ENCODE measurements at regions of chr10 and their contacts with region 1.

Region 1: DNA sequence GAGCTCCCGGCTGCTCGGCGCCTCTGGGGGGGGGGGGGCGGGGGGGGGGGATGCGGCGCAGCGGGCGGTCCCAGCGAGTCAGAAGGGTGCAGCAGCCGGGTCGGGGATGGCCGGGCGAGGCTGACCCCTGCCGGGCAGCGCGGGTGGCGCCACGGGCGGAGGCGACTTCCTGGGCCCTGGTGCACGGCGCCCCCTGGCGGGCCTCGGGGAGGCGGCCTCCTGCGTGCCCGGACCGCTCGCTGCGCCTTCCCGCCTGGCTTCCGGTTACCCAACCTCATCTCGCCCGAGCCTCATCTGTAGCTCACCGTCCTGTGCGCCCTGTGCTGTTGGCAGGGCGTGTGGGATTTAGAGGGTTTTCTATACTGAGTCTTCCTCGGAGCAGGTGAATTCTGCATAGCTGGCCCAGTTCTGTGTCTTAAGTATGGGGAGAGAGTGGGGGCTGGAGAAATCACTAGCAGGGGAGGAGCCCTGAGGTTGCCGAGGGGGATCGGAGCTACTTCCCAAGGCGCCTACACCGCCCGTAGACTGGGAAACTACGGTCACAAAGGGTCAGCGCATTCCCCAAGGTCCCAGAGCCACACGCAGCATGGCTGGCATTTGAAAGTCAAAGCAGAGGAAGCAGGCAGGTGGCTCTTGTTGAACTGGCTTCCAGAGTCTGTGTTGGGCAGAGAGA is 28.3 kb upstream of the WDFY4 start:
- DNase-seq: peak; percentile 89 to 99
- H3K4me3 ChIP-seq: peak overlapping the region; percentile 55
- H3K4me3 Mint-ChIP-seq: peak overlapping the region; percentile 77
- H3K27ac Mint-ChIP-seq: no peak overlapping the region
- H3K4me1 ChIP-seq: peaks cover 12% of the 10 kb centered on the region
- H3K4me1 Mint-ChIP-seq: peaks cover 5% of the 10 kb centered on the region
- H3K27me3 ChIP-seq: peaks cover 1% of the 10 kb centered on the region; the same call in 1 of the 2 replicates
- H3K27me3 Mint-ChIP-seq: peaks cover 31% of the 10 kb centered on the region
- CTCF ChIP-seq: peak; percentile 96 to 99

Region 2: DNA sequence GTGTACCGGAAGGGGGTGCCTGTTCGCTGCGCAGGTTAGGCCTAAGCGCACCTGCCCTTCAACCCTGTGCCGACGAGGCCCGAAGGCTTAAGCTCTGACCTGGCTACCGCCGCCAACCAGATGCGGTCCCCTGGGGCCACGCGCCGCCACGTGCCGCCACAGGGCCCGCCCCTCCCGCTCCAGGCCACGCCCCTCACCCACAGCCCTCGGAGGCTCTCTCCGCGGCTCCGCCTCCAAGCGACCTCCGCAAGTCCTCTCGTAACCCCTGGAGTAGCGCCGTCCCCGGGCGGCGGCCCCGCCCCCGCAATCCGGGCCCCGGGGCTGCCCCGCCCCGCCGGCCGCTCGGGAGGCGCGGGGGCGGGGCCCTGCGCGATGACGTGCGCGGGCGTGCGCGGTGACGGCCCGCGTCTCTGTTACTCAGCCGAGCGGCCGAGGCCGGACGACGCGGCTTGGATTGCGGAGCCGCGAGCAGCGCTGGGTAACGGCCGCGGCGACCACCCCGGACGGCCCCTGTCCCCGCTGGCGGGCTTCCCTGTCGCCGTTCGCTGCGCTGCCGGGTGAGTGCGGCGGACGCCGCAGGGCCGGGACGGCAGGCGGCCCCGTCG is 350.0 kb before region 1 on chr10 and contains the start of gene MAPK8:
- CTCF ChIA-PET with region 1: interaction called, 11 read pairs
- POLR2A ChIA-PET with region 1: interaction called, 6 read pairs
- intact Hi-C with region 1: loop called (anchors 1 kb)
- DNase-seq: peak; percentile 98 to 100
- H3K4me3 ChIP-seq: peak within 1 kb of the TSS; percentile 88
- H3K4me3 Mint-ChIP-seq: peak within 1 kb of the TSS; percentile 81
- H3K27ac Mint-ChIP-seq: peak within 1 kb of the TSS; percentile 47
- H3K4me1 ChIP-seq: peaks cover 21% of the 10 kb centered on the region
- H3K4me1 Mint-ChIP-seq: peaks cover 9% of the 10 kb centered on the region
- H3K27me3 ChIP-seq: no peaks in the 10 kb centered on the region
- H3K27me3 Mint-ChIP-seq: peaks cover 7% of the 10 kb centered on the region
- CTCF ChIP-seq: no peak
- total RNA-seq, gene MAPK8: 76.1 and 83.3 TPM in 2 replicates

Region 3: DNA sequence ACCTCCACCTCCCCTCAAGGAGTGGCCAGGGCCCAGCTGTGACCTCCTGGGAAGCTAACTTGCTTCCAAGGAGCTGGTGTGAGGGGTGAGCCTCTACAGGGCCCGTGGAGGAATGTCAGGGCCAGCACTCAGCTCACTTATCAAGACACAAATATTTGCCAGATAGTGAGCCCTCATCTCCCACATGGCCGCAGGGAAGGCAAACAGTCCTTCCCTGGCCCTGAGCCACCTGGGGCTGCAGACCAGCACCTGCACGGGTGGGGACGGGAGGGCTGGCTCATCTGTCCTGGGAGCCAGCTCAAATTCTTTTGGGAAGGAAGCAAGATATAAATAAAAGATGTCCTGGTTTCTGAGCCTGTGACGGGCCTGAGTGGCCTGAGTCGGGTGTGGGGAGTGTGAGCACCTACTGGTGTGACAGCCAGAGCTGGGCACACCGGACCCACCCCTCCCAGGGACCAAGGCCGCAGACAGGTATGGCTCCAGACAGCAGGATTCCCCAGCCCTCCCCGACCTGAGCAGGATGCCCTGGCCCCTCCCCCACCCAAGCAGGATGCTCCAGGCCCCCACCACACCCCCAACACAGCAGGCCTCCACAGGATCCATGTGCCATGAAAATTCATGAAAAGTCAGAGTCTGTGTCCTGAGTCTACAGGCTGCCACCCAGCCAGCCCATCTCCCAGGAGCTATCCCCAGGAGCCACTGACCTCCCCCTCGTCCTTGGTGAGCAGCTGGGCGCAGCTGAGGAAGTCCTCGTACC is 201.9 kb before region 1 on chr10:
- CTCF ChIA-PET with region 1: interaction called, 11 read pairs
- POLR2A ChIA-PET with region 1: no interaction called
- intact Hi-C with region 1: no loop called
- DNase-seq: peak; percentile 83 to 92
- H3K4me3 ChIP-seq: no peak overlapping the region
- H3K4me3 Mint-ChIP-seq: peak overlapping the region; percentile 42
- H3K27ac Mint-ChIP-seq: peak overlapping the region; percentile 92
- H3K4me1 ChIP-seq: peaks cover 47% of the 10 kb centered on the region
- H3K4me1 Mint-ChIP-seq: peaks cover 19% of the 10 kb centered on the region
- H3K27me3 ChIP-seq: no peaks in the 10 kb centered on the region
- H3K27me3 Mint-ChIP-seq: no peaks in the 10 kb centered on the region
- CTCF ChIP-seq: no peak

Region 4: DNA sequence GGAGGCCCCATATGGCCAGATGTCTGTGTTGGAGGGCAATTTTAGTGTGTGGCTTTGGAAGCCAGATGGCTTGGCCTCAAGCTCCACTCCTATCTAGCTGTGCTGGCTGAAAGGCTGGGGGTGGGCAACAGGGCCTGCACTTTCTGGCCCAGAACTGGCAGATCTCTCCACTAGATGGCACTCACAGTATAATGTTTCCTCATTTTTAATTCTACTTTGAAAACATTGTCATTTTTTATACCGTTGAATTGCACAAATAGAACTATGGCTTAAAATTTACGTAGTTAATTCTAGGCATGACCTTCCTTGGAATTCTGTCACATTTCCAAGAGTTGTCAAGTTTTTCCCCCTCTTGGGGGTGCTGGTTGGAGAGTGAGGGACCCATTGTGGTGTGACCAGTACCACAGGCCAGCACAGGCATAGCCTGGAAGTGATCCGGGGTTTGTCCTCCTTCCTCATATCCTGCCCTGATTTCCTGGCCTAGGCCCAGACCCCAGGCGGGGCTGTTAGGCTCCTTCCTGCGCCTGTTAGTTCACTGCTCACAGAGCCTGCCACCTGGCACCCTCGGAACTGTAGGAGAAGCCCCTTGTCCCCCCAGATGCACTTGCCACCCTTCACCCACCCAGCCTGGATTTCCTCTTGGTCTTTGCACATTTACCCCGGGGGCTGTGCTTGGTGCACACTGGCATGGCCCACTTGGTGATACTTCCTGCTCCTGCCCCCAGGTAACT is 104.4 kb before region 1 on chr10:
- CTCF ChIA-PET with region 1: interaction called, 71 read pairs
- POLR2A ChIA-PET with region 1: no interaction called
- intact Hi-C with region 1: loop called (anchors 1 kb)
- DNase-seq: peak in 1 of 2 experiments; percentile 58
- H3K4me3 ChIP-seq: no peak overlapping the region
- H3K4me3 Mint-ChIP-seq: no peak overlapping the region
- H3K27ac Mint-ChIP-seq: no peak overlapping the region
- H3K4me1 ChIP-seq: no peaks in the 10 kb centered on the region
- H3K4me1 Mint-ChIP-seq: no peaks in the 10 kb centered on the region
- H3K27me3 ChIP-seq: no peaks in the 10 kb centered on the region
- H3K27me3 Mint-ChIP-seq: no peaks in the 10 kb centered on the region
- CTCF ChIP-seq: peak; percentile 84 to 86

Region 5: DNA sequence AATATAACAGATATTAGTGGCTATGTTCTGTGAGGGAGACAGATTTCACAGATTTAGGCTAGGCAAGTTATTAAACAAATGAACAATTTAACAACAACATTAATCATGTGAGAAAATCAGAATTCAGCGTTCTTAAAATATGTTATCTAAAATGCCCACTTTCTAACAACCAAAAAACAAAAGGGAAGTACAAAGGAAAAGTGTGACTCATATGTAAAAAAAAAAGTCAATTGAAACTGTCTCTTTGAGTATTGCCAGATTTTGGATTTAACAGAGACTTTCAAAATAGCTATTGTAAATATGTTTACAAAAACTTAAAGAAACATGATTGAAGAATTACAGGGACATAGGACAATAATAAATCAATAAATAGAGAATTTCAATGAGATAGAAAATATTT is 16.7 kb before region 1 on chr10:
- CTCF ChIA-PET with region 1: interaction called, 13 read pairs
- POLR2A ChIA-PET with region 1: no interaction called
- intact Hi-C with region 1: no loop called
- DNase-seq: no peak
- H3K4me3 ChIP-seq: no peak overlapping the region
- H3K4me3 Mint-ChIP-seq: no peak overlapping the region
- H3K27ac Mint-ChIP-seq: no peak overlapping the region
- H3K4me1 ChIP-seq: no peaks in the 10 kb centered on the region
- H3K4me1 Mint-ChIP-seq: no peaks in the 10 kb centered on the region
- H3K27me3 ChIP-seq: no peaks in the 10 kb centered on the region
- H3K27me3 Mint-ChIP-seq: peaks cover 6% of the 10 kb centered on the region
- CTCF ChIP-seq: no peak

Region 6: GRCh38 chr10:48879451-48879850 is 223.1 kb after region 1 on chr10:
- CTCF ChIA-PET with region 1: interaction called, 4 read pairs
- POLR2A ChIA-PET with region 1: no interaction called
- intact Hi-C with region 1: loop called (anchors 2 kb)
- DNase-seq: no peak
- H3K4me3 ChIP-seq: no peak overlapping the region
- H3K4me3 Mint-ChIP-seq: no peak overlapping the region
- H3K27ac Mint-ChIP-seq: no peak overlapping the region
- H3K4me1 ChIP-seq: no peaks in the 10 kb centered on the region
- H3K4me1 Mint-ChIP-seq: no peaks in the 10 kb centered on the region
- H3K27me3 ChIP-seq: peaks cover 2% of the 10 kb centered on the region; the same call in 1 of the 2 replicates
- H3K27me3 Mint-ChIP-seq: peaks cover 29% of the 10 kb centered on the region
- CTCF ChIP-seq: no peak

Region 7: DNA sequence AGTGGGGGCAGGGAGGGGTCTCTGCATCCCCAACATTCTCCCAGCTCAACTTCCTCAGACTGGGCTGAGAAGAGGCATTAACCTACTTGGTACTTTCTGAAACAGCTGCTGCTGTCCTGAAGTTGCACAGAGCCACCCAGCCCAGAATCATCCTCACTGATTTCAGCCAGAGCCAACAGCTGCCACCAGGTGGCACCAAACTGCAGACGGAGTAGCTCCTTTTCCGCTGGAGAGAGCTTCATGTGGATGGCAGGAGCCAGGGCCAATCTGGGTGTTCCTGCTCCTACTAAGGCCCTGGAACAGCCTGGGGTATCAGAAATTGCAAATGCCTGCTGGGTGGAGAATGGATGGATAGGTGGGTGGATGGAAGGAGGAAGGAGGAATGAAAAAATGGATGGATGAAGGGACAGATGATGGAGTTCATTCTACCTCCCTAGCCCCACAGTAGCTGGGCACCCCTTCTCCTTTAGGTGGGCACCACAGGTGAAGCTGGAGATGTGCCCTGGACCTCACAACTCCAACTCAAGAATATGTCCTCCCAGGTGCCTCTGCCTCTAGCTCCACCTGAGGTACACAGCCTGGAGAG is 751.3 kb after region 1 on chr10:
- CTCF ChIA-PET with region 1: interaction called, 12 read pairs
- POLR2A ChIA-PET with region 1: no interaction called
- intact Hi-C with region 1: no loop called
- DNase-seq: peak; percentile 84 to 91
- H3K4me3 ChIP-seq: no peak overlapping the region
- H3K4me3 Mint-ChIP-seq: no peak overlapping the region
- H3K27ac Mint-ChIP-seq: no peak overlapping the region
- H3K4me1 ChIP-seq: peaks cover 3% of the 10 kb centered on the region; the same call in 1 of the 2 replicates
- H3K4me1 Mint-ChIP-seq: peaks cover 6% of the 10 kb centered on the region
- H3K27me3 ChIP-seq: no peaks in the 10 kb centered on the region; the same call in 1 of the 2 replicates
- H3K27me3 Mint-ChIP-seq: peaks cover 14% of the 10 kb centered on the region
- CTCF ChIP-seq: peak; percentile 95 to 98

Measured in Caco-2 (cell line).